Transverse colon (tissue), 4 donors: ENCODE measurements at regions of chr10 and their contacts with region 1.

Region 1: GRCh38 chr10:6202684-6203330 is at the start of gene PFKFB3:
- DNase-seq: peak; percentile 95
- H3K4me3 ChIP-seq: peak within 1 kb of the TSS; percentile 52 to 96 (median 62)
- H3K27ac ChIP-seq: peak within 1 kb of the TSS; percentile 91 to 100 (median 93)
- H3K4me1 ChIP-seq: peaks cover 15 to 35% (median 32%) of the 10 kb centered on the region in 4 donors
- H3K27me3 ChIP-seq: no peaks in the 10 kb centered on the region
- CTCF ChIP-seq: peak; percentile 96 to 99 (median 98)
- EP300 ChIP-seq: no peak
- POLR2A ChIP-seq: peak; percentile 96
- total RNA-seq, gene PFKFB3: 16.9 to 29.9 (median 20.2) TPM

Region 2: DNA sequence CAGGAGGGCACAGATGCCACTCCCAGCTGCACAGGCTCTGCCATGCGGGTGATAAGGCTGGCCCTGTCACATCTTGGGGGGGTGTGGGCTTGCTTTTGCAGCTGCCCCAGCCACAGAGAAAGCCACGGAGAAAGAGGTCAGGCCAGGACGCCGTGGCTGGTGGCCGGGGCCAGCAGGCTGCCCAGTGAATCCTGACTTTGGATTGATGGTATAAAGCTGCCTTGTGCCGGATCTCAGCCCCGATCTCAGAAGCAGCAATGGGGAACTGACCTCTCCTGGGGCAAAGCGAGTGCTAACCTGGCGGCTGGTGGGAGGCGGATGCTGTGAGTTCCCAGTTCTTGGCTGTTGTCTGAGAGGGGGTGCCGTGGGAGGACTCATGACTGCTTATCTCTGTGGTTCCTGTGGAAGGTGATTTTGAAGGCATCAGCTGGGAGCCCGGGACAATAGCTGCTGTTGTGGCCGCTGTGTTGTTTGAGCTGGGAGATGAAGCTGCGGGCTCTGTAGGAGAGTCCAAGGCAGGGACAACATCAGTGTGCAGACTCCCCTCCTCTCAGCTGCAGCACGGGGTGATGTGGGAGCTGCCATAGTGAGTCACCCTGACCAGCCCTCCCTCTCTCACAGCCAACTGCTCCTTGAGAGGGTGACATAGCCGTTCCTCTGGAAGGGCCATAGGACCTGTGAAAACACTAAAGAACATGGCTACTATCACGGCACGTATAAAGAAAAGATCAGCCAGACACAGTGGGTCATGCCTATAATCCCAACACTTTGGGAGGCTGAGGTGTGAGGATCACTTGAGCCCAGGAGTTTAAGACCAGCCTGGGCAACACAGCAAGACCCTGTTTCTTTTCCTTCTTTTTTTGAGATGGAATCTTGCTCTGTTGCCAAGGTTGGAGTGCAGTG is 242.5 kb before region 1 on chr10:
- in situ Hi-C with region 1: no loop called
- intact Hi-C with region 1: no loop called
- DNase-seq: no peak
- H3K4me3 ChIP-seq: no peak overlapping the region
- H3K27ac ChIP-seq: no peak overlapping the region
- H3K4me1 ChIP-seq: peaks cover 0 to 5% (median 0%) of the 10 kb centered on the region in 4 donors
- H3K27me3 ChIP-seq: no peaks in the 10 kb centered on the region
- CTCF ChIP-seq: no peak
- EP300 ChIP-seq: no peak
- POLR2A ChIP-seq: no peak

Region 3: DNA sequence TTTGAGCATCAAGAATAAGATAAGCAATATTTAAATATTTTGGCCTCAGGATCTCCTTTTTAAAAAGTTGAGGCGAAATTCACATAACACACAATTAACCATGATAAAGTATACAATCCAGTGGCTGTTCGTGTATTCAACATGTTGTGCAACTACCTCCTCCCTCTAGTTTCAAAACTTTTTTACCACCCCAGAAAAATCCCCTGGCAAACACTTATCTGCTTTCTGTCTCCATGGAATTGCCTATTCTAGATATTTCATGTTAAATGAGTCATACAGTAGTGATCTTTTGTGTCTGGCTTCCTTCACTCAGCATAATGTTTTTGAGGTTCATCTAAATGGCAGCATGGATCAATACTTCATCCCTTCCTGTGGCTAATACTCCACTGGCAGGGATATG is 193.7 kb before region 1 on chr10:
- in situ Hi-C with region 1: no loop called
- intact Hi-C with region 1: no loop called
- DNase-seq: no peak
- H3K4me3 ChIP-seq: no peak overlapping the region
- H3K27ac ChIP-seq: peak overlapping the region in 2 of 4 donors; percentile 1 to 13
- H3K4me1 ChIP-seq: peaks cover 0 to 3% (median 0%) of the 10 kb centered on the region in 4 donors
- H3K27me3 ChIP-seq: no peaks in the 10 kb centered on the region
- CTCF ChIP-seq: no peak
- EP300 ChIP-seq: no peak
- POLR2A ChIP-seq: no peak

Region 4: GRCh38 chr10:6088721-6089390 is 114.0 kb before region 1 on chr10 and contains the start of gene RBM17:
- in situ Hi-C with region 1: no loop called
- intact Hi-C with region 1: loop called (anchors 5 kb)
- DNase-seq: peak; percentile 96
- H3K4me3 ChIP-seq: peak within 1 kb of the TSS; percentile 80 to 100 (median 96)
- H3K27ac ChIP-seq: peak within 1 kb of the TSS; percentile 82 to 94 (median 94)
- H3K4me1 ChIP-seq: peaks cover 0 to 51% (median 25%) of the 10 kb centered on the region in 4 donors
- H3K27me3 ChIP-seq: no peaks in the 10 kb centered on the region
- CTCF ChIP-seq: peak; percentile 99 to 100 (median 100)
- EP300 ChIP-seq: no peak
- POLR2A ChIP-seq: no peak
- total RNA-seq, gene RBM17: 45.0 to 80.7 (median 64.7) TPM

Region 5: GRCh38 chr10:6114805-6115341 is 87.9 kb before region 1 on chr10:
- in situ Hi-C with region 1: loop called in 1 of 4 experiments (anchors 10 kb)
- intact Hi-C with region 1: no loop called
- DNase-seq: no peak
- H3K4me3 ChIP-seq: no peak overlapping the region
- H3K27ac ChIP-seq: peak overlapping the region in 1 of 4 donors; percentile 21
- H3K4me1 ChIP-seq: peaks cover 0 to 4% (median under 1%) of the 10 kb centered on the region in 4 donors
- H3K27me3 ChIP-seq: no peaks in the 10 kb centered on the region
- CTCF ChIP-seq: no peak
- EP300 ChIP-seq: no peak
- POLR2A ChIP-seq: no peak

Region 6: DNA sequence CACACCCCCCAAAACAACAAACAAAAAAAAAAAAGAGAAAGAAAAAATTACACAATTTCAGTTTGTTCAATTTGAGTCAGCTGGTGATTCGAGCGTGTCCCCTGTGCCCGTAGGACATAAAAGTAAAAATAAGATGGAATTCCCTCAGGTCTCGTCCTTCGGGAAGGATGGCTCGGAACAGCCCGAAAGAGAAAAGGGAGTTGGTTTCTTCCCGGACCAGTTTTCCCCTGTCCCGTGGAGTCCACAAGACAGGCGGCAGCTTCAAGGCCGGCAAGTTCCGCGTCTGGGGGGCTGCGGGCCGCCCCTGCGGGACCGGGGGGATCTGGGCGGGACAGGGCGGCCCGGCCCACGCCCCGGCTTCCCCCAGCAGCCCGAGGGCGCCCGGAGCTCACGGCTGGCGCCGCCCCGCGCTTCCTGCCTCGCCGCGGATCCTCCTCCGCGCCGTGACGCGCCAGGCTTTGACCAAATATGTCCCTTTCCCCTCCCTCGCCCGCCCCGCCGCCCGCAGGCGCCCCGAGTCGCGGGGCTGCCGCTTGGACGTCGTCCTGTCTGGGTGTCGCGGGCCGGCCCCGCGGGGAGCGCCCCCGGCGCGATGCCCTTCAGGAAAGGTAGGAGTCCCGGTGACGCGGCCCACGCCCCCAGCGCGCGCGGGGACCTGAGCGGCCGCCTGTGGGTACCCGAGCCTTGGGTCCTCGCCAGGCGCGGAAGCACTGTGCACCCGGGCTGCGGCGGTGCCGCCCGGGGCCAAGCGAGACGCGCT is 58.2 kb before region 1 on chr10:
- in situ Hi-C with region 1: loop called in 1 of 4 experiments (anchors 10 kb)
- intact Hi-C with region 1: loop called (anchors 5 kb)
- DNase-seq: peak; percentile 93
- H3K4me3 ChIP-seq: peak overlapping the region; percentile 74 to 89 (median 80)
- H3K27ac ChIP-seq: peak overlapping the region; percentile 87 to 95 (median 90)
- H3K4me1 ChIP-seq: peaks cover 6 to 42% (median 21%) of the 10 kb centered on the region in 4 donors
- H3K27me3 ChIP-seq: no peaks in the 10 kb centered on the region
- CTCF ChIP-seq: no peak
- EP300 ChIP-seq: no peak
- POLR2A ChIP-seq: peak; percentile 55

Region 7: GRCh38 chr10:6163364-6164270 is 39.2 kb before region 1 on chr10:
- in situ Hi-C with region 1: no loop called
- intact Hi-C with region 1: loop called (anchors 5 kb)
- DNase-seq: peak; percentile 94
- H3K4me3 ChIP-seq: peak overlapping the region; percentile 71 to 83 (median 75)
- H3K27ac ChIP-seq: peak overlapping the region; percentile 93 to 99 (median 96)
- H3K4me1 ChIP-seq: peaks cover 12 to 28% (median 22%) of the 10 kb centered on the region in 4 donors
- H3K27me3 ChIP-seq: no peaks in the 10 kb centered on the region
- CTCF ChIP-seq: no peak
- EP300 ChIP-seq: peak; percentile 57
- POLR2A ChIP-seq: peak; percentile 76

Region 8: DNA sequence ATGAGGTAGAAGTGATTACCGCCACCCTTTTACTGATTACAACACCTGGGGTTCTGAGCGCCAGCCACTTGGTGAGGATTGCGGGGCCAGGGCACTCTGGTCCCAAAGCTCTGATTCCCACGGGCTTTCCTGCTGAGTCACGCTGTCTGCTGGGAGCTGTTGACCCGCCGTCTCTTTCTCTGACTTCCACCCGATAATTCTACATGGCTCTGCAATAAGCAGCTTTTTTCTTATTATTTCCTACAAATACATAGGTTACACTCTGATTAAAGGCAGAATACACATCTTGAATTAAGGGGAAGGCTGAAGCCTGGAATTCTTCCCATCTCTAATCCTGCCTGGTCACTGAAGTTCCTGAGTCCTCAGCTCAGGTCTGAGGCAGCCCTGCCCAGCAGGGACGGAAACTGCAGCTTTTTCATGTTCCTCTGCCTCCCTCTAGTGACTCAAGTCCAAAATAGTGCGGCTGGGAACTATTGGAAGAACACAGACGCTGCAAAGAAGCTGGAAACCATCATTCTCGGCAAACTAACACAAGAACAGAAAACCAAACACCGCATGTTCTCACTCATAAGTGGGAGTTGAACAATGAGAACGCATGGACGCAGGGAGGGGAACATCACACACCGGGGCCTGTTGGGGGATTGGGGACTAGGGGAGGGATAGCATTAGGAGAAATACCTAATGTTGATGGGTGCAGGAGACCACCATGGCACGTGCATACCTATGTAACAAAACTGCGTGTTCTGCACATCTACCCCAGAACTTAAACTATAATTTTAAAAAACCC is 198.9 kb after region 1 on chr10:
- in situ Hi-C with region 1: no loop called
- intact Hi-C with region 1: loop called (anchors 1 kb)
- DNase-seq: peak; percentile 73
- H3K4me3 ChIP-seq: peak overlapping the region in 3 of 4 donors; percentile 24 to 49 (median 27)
- H3K27ac ChIP-seq: peak overlapping the region in 3 of 4 donors; percentile 18 to 42 (median 30)
- H3K4me1 ChIP-seq: peaks cover 0 to 11% (median 2%) of the 10 kb centered on the region in 4 donors
- H3K27me3 ChIP-seq: no peaks in the 10 kb centered on the region
- CTCF ChIP-seq: peak; percentile 66 to 89 (median 73)
- EP300 ChIP-seq: no peak
- POLR2A ChIP-seq: no peak

Region 9: DNA sequence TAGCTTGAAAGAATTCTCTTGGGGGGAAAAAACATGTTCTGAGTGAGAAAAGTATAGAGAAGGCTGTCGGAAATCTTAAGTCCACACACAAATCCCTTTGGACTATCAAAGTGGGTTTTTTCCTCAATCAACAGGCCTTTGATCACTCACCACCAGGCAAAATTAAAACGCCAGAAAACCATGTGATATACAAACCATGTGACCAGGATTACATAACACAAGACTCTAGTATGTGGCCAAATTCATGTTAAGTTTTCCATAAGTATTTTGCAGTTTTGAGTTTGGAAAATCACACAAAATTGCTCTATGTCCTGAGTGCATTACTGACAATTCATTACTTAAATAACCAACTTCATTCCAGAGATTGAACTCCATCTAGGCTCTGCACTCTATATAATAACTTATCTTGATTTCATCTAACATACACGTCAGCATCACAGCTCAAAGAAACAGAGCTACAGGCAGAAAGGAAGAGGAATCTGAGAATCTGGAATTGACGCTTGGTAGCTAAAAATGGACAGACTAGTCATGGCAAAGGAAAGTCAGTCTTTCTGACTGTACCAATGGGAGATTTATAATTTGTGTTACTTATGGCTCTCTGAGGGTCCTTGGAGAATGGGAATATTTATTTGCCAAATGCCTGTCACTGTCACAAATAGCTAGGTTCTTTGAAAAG is 824.6 kb after region 1 on chr10:
- in situ Hi-C with region 1: no loop called
- intact Hi-C with region 1: no loop called
- DNase-seq: no peak
- H3K4me3 ChIP-seq: no peak overlapping the region
- H3K27ac ChIP-seq: no peak overlapping the region
- H3K4me1 ChIP-seq: no peaks in the 10 kb centered on the region
- H3K27me3 ChIP-seq: no peaks in the 10 kb centered on the region
- CTCF ChIP-seq: no peak
- EP300 ChIP-seq: no peak
- POLR2A ChIP-seq: no peak